CD8-positive, alpha-beta T cell (primary cell): ENCODE measurements at regions of chr9 and their contacts with region 1.

Region 1: GRCh38 chr9:9603345-9603744 is 1009.5 kb downstream of the PTPRD start:
- DNase-seq: no peak
- ATAC-seq: no peak
- H3K4me3 ChIP-seq: no peak overlapping the region
- H3K4me3 Mint-ChIP-seq: no peak overlapping the region
- H3K27ac ChIP-seq: no peak overlapping the region
- H3K27ac Mint-ChIP-seq: no peak overlapping the region
- H3K4me1 ChIP-seq: no peaks in the 10 kb centered on the region
- H3K4me1 Mint-ChIP-seq: no peaks in the 10 kb centered on the region
- H3K27me3 ChIP-seq: no peaks in the 10 kb centered on the region
- H3K27me3 Mint-ChIP-seq: no peaks in the 10 kb centered on the region
- CTCF ChIP-seq: no peak

Region 2: DNA sequence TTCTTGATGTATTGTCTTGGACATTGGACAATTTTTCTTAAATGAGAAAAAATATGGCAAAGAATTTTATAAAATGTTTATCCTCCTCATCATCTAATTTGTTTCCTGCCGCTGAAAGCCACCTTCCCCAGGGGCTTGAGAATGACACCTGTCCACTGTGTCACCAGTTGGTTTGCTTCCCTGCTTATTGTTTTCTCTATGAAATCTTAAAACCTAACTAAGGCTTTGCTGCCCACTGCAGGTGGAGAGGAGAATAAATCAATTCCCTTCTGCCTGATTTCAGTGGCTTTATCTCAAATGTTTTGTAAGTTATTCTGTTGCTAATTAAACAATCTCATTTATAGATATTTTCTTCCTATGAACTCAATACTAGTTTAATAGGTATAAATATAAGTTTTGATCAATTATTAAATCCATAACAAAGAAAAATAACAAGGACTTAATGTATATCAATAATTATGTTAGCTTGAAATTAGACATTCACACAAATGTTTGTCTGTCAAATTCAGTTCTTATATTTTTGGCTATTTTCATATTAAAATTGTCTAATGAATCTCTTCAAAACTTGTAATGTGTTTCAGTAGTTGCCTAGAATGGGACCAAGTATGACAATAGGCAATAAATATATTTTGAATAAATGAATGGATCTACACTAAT is 187.0 kb after region 1 on chr9:
- CTCF ChIA-PET with region 1: interaction called, 8 read pairs
- POLR2A ChIA-PET with region 1: no interaction called
- intact Hi-C with region 1: loop called in 1 of 2 experiments (anchors 2 kb)
- DNase-seq: peak in 1 of 9 experiments; percentile 6
- ATAC-seq: no peak
- H3K4me3 ChIP-seq: no peak overlapping the region
- H3K4me3 Mint-ChIP-seq: no peak overlapping the region
- H3K27ac ChIP-seq: no peak overlapping the region
- H3K27ac Mint-ChIP-seq: no peak overlapping the region
- H3K4me1 ChIP-seq: no peaks in the 10 kb centered on the region
- H3K4me1 Mint-ChIP-seq: no peaks in the 10 kb centered on the region
- H3K27me3 ChIP-seq: no peaks in the 10 kb centered on the region
- H3K27me3 Mint-ChIP-seq: no peaks in the 10 kb centered on the region
- CTCF ChIP-seq: no peak

Region 3: GRCh38 chr9:9942764-9943424 is 339.5 kb after region 1 on chr9:
- CTCF ChIA-PET with region 1: no interaction called
- POLR2A ChIA-PET with region 1: no interaction called
- intact Hi-C with region 1: loop called in 1 of 2 experiments (anchors 10 kb)
- DNase-seq: peak; percentile 2 to 59 (median 29)
- ATAC-seq: peak; percentile 55
- H3K4me3 ChIP-seq: no peak overlapping the region
- H3K4me3 Mint-ChIP-seq: no peak overlapping the region
- H3K27ac ChIP-seq: no peak overlapping the region
- H3K27ac Mint-ChIP-seq: no peak overlapping the region
- H3K4me1 ChIP-seq: no peaks in the 10 kb centered on the region
- H3K4me1 Mint-ChIP-seq: no peaks in the 10 kb centered on the region
- H3K27me3 ChIP-seq: no peaks in the 10 kb centered on the region
- H3K27me3 Mint-ChIP-seq: no peaks in the 10 kb centered on the region
- CTCF ChIP-seq: peak; percentile 96

Region 4: DNA sequence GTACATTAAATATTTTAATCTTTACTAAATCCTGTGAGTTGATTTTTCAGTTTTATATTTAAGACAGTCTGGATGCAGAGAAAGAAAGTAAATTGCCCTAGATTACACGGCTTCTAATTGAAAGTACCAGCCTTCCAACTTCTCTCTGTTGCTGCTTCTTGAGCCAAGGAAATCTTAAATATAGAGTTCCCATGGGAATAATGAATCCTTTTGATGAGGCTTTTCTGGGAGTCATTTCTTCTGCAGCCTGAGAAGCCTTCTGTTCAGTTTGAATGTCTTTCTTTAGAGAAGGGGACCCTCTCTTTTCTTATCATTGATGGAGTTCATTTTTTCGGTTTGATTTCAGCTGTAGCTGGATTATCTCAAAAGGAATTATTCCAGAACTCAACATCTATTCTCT is 1326.7 kb after region 1 on chr9:
- CTCF ChIA-PET with region 1: no interaction called
- POLR2A ChIA-PET with region 1: no interaction called
- intact Hi-C with region 1: no loop called
- DNase-seq: no peak
- ATAC-seq: no peak
- H3K4me3 ChIP-seq: no peak overlapping the region
- H3K4me3 Mint-ChIP-seq: no peak overlapping the region
- H3K27ac ChIP-seq: no peak overlapping the region
- H3K27ac Mint-ChIP-seq: no peak overlapping the region
- H3K4me1 ChIP-seq: no peaks in the 10 kb centered on the region
- H3K4me1 Mint-ChIP-seq: no peaks in the 10 kb centered on the region
- H3K27me3 ChIP-seq: no peaks in the 10 kb centered on the region
- H3K27me3 Mint-ChIP-seq: no peaks in the 10 kb centered on the region
- CTCF ChIP-seq: no peak